HCT116 (cell line): ENCODE measurements at regions of chr15 and their contacts with region 1.

Region 1: DNA sequence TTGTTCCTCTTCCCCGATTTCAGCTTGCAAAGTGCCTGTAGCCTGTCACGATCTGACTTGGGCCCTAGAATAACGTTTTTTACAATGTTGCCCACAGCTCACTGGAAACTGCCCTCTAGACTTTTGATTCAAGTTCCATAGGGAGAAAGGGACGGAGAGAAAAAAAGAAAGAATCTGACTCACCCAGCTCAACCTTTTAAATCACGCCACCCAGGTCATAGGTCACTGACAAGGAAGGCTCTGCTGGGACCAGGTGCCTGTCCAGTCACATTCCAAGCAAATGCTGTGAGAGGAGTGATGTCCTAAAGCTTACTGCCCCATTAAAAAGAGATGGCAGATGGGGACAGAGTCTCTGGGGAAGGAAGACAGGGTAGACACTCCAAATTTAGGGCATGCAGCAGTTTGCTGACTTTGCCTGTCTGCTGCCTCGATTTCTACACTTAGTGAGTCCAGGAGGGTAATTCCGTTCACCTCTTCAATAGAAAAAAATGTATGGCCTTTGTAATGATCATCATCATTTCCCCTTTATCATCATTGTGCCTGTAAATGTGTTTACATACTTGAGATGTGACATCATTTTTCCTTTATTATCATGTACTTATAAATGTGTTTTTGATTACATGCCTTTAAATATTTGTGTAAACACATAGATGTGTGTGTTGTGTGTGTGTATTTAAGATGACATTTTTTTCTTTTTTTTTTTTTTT is 8.4 kb upstream of the MYO1E start:
- DNase-seq: peak; percentile 31
- ATAC-seq: peak; percentile 86
- H3K4me3 ChIP-seq: peak overlapping the region in 1 of 2 experiments; percentile 22; a peak in 1 of 4 replicates
- H3K27ac ChIP-seq: no peak overlapping the region
- H3K4me1 ChIP-seq: peaks cover 11 to 14% of the 10 kb centered on the region in 2 experiments
- H3K27me3 ChIP-seq: no peaks in the 10 kb centered on the region
- CTCF ChIP-seq: no peak
- POLR2A ChIP-seq: no peak
- RAD21 ChIP-seq: no peak

Region 2: DNA sequence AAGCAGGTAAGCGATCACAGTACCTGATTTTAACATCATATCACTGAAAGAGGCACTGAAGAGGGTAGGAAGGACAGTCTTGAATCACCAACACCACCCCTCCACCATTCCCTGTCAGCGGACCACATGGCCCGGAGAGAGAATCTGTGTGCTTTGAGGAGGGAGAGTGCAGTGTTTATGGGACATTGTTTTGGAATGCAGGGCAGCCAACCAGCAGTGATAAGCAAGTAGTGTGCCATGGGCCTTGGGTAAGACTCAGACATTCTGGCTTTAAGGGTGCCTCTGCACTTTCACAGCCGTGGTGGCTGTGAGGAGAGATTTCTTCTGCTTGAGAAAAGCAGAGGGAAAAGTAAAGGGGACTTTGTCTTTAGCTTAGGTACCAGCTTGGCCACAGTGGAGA is 103.3 kb after region 1 on chr15:
- CTCF ChIA-PET with region 1: no interaction called
- POLR2A ChIA-PET with region 1: no interaction called
- RAD21 ChIA-PET with region 1: no interaction called
- intact Hi-C with region 1: loop called (anchors 1 kb)
- DNase-seq: no peak
- ATAC-seq: no peak
- H3K4me3 ChIP-seq: no peak overlapping the region
- H3K27ac ChIP-seq: no peak overlapping the region
- H3K4me1 ChIP-seq: peaks cover 5 to 14% of the 10 kb centered on the region in 2 experiments
- H3K27me3 ChIP-seq: no peaks in the 10 kb centered on the region
- CTCF ChIP-seq: no peak
- POLR2A ChIP-seq: no peak
- RAD21 ChIP-seq: no peak

Region 3: GRCh38 chr15:59656897-59657634 is 276.0 kb after region 1 on chr15 and contains the start of gene GTF2A2:
- CTCF ChIA-PET with region 1: no interaction called
- POLR2A ChIA-PET with region 1: no interaction called
- RAD21 ChIA-PET with region 1: no interaction called
- intact Hi-C with region 1: no loop called
- DNase-seq: peak; percentile 81
- ATAC-seq: peak; percentile 100
- H3K4me3 ChIP-seq: peak within 1 kb of the TSS; percentile 88 to 89
- H3K27ac ChIP-seq: peak within 1 kb of the TSS; percentile 74
- H3K4me1 ChIP-seq: peaks cover 6 to 20% of the 10 kb centered on the region in 2 experiments
- H3K27me3 ChIP-seq: no peaks in the 10 kb centered on the region
- CTCF ChIP-seq: no peak
- POLR2A ChIP-seq: peak; percentile 34
- RAD21 ChIP-seq: no peak
- total RNA-seq, gene GTF2A2: 175 TPM